CD8-positive, alpha-beta T cell (primary cell): ENCODE measurements at regions of chr11 and their contacts with region 1.

Region 1: DNA sequence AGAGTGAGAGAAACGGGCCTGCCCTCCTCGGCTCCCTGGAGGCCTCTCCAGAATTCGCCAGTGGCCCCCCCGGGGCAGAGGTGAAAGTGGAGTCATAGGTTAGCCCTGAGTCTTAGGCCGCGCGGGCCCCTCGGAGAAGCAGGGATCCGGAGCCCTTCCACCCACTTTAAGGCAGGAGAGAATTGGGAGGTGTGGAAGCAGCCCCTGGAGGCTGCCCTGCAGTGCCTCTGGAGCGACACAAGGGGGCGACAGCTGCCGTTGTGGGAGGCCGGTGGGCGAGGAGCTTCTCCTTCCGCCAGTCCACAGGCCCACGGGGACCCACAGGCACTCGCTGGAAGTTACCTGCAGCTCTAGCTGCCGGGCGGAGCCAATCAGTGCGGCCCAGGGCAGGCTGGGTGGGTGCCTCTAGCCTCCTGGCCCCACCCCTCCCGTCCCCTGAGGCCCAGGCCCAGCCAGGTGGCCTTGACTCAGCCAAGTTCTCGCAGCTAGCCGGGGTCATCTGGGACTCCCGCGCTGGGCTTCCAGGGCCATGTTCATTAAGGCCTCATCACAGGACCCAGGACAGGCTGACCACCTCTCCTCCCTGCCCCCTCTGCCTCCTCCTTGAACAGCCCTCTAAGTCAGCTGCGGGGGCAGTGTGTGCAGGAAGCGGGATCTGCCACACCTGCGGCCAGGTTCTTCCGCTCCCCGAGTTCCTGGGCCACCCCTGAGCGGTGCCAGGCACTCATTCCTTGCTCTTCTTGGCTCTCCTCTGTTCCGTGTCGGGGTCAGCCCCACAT is 5.0 kb downstream of the DGKZ start:
- DNase-seq: peak; percentile 62 to 93 (median 85)
- ATAC-seq: peak; percentile 65
- H3K4me3 ChIP-seq: peak overlapping the region; percentile 41 to 66
- H3K4me3 Mint-ChIP-seq: peak overlapping the region; percentile 84
- H3K27ac ChIP-seq: peak overlapping the region; percentile 27 to 64
- H3K27ac Mint-ChIP-seq: peak overlapping the region; percentile 92
- H3K4me1 ChIP-seq: peaks cover 79% of the 10 kb centered on the region
- H3K4me1 Mint-ChIP-seq: peaks cover 77% of the 10 kb centered on the region
- H3K27me3 ChIP-seq: no peaks in the 10 kb centered on the region
- H3K27me3 Mint-ChIP-seq: no peaks in the 10 kb centered on the region
- CTCF ChIP-seq: peak; percentile 93

Region 2: GRCh38 chr11:46308631-46309419 is 43.4 kb before region 1 on chr11:
- CTCF ChIA-PET with region 1: interaction called, 10 read pairs
- POLR2A ChIA-PET with region 1: interaction called, 4 read pairs
- intact Hi-C with region 1: no loop called
- DNase-seq: peak; percentile 22 to 78 (median 65)
- ATAC-seq: peak; percentile 90
- H3K4me3 ChIP-seq: no peak overlapping the region
- H3K4me3 Mint-ChIP-seq: no peak overlapping the region
- H3K27ac ChIP-seq: no peak overlapping the region
- H3K27ac Mint-ChIP-seq: no peak overlapping the region
- H3K4me1 ChIP-seq: peaks cover 15% of the 10 kb centered on the region
- H3K4me1 Mint-ChIP-seq: peaks cover 11% of the 10 kb centered on the region
- H3K27me3 ChIP-seq: no peaks in the 10 kb centered on the region
- H3K27me3 Mint-ChIP-seq: no peaks in the 10 kb centered on the region
- CTCF ChIP-seq: peak; percentile 85

Region 3: DNA sequence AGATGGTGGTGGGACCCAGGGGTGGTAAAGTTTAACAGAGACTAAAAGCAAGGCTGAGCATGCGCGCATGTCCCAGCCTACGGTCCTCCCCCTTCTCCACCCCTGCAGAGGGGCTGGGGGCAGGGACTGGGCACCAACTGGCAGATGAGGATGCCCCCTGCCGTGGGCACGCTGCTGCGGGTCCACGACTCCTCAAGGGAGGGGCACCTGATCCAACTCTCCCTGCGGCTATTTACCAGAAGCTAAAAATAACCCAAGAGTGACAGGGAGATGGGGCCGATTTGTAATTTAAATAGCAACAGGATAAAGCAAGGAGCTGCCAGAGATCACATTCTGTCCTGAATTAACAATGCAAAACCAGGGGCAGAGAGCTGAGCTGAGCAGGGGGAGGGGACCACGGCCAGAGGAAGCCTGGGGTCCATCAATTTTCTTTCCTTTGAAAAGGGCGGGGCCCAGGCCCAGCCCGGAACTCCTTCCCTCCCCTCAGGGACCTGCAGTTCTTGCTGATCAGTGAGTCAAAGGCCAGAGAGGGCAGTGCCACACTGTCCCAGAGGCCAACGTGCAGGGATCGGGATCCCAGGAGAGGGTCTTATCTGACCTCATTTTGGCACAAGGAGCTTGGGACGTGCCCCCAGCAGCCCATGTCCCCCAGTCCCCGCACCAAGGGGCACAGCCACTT is 13.1 kb before region 1 on chr11:
- CTCF ChIA-PET with region 1: interaction called, 43 read pairs
- POLR2A ChIA-PET with region 1: interaction called, 47 read pairs
- intact Hi-C with region 1: no loop called
- DNase-seq: no peak
- ATAC-seq: no peak
- H3K4me3 ChIP-seq: no peak overlapping the region
- H3K4me3 Mint-ChIP-seq: no peak overlapping the region
- H3K27ac ChIP-seq: no peak overlapping the region
- H3K27ac Mint-ChIP-seq: peak overlapping the region; percentile 25
- H3K4me1 ChIP-seq: peaks cover 46% of the 10 kb centered on the region
- H3K4me1 Mint-ChIP-seq: peaks cover 56% of the 10 kb centered on the region
- H3K27me3 ChIP-seq: peaks cover 0 to 9% of the 10 kb centered on the region in 2 experiments
- H3K27me3 Mint-ChIP-seq: no peaks in the 10 kb centered on the region
- CTCF ChIP-seq: no peak

Region 4: DNA sequence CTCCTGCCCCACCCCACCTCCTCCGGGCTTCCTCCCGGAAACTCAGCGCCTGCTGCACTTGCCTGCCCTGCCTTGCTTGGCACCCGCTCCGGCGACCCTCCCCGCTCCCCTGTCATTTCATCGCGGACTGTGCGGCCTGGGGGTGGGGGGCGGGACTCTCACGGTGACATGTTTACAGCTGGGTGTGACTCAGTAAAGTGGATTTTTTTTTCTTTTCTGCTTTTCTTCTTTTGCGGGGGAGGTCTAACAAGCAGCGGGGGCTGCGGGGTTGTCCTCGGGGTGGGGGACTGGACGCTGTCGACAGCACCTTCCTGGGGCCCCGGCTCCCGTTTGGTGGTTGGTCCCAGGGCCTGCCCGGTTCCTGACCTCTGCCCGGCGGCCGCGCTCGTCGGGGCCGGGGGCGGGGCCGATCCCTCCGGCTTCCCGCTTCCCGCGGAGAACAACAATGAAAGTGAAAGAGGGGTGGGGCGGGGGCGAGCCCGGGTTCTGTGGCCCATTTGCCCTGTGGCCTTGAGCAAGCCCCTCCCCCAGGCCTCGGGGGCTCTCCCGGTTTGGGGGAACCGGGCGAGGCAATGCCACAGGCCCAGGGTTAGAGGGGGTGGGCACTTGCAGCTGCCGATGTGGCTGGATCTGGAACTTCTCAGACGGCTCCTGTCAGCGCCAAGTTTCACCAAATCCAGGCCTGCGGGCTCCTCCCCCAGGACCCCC is 28.2 kb after region 1 on chr11:
- CTCF ChIA-PET with region 1: interaction called, 412 read pairs
- POLR2A ChIA-PET with region 1: interaction called, 9 read pairs
- intact Hi-C with region 1: loop called in 1 of 2 experiments (anchors 5 kb)
- DNase-seq: peak in 8 of 9 experiments; percentile 27 to 72 (median 52)
- ATAC-seq: peak; percentile 57
- H3K4me3 ChIP-seq: peak overlapping the region; percentile 60 to 62
- H3K4me3 Mint-ChIP-seq: peak overlapping the region; percentile 78
- H3K27ac ChIP-seq: peak overlapping the region; percentile 27 to 44
- H3K27ac Mint-ChIP-seq: peak overlapping the region; percentile 83
- H3K4me1 ChIP-seq: peaks cover 11% of the 10 kb centered on the region
- H3K4me1 Mint-ChIP-seq: peaks cover 8% of the 10 kb centered on the region
- H3K27me3 ChIP-seq: peaks cover 0 to 16% of the 10 kb centered on the region in 2 experiments
- H3K27me3 Mint-ChIP-seq: peaks cover 5% of the 10 kb centered on the region
- CTCF ChIP-seq: no peak

Region 5: GRCh38 chr11:46936138-46937110 is 584.2 kb after region 1 on chr11 and contains the start of gene CSTPP1:
- CTCF ChIA-PET with region 1: no interaction called
- POLR2A ChIA-PET with region 1: no interaction called
- intact Hi-C with region 1: loop called (anchors 10 kb)
- DNase-seq: peak; percentile 80 to 97 (median 93)
- ATAC-seq: peak; percentile 96
- H3K4me3 ChIP-seq: peak within 1 kb of the TSS; percentile 73 to 82
- H3K4me3 Mint-ChIP-seq: peak within 1 kb of the TSS; percentile 97
- H3K27ac ChIP-seq: peak within 1 kb of the TSS; percentile 58 to 71
- H3K27ac Mint-ChIP-seq: peak within 1 kb of the TSS; percentile 95
- H3K4me1 ChIP-seq: peaks cover 9% of the 10 kb centered on the region
- H3K4me1 Mint-ChIP-seq: peaks cover 20% of the 10 kb centered on the region
- H3K27me3 ChIP-seq: no peaks in the 10 kb centered on the region
- H3K27me3 Mint-ChIP-seq: peaks cover 6% of the 10 kb centered on the region
- CTCF ChIP-seq: no peak
- total RNA-seq, gene CSTPP1: 4.1 to 4.6 TPM